K562 (cell line): ENCODE measurements at regions of chr15 and their contacts with region 1.

Region 1: DNA sequence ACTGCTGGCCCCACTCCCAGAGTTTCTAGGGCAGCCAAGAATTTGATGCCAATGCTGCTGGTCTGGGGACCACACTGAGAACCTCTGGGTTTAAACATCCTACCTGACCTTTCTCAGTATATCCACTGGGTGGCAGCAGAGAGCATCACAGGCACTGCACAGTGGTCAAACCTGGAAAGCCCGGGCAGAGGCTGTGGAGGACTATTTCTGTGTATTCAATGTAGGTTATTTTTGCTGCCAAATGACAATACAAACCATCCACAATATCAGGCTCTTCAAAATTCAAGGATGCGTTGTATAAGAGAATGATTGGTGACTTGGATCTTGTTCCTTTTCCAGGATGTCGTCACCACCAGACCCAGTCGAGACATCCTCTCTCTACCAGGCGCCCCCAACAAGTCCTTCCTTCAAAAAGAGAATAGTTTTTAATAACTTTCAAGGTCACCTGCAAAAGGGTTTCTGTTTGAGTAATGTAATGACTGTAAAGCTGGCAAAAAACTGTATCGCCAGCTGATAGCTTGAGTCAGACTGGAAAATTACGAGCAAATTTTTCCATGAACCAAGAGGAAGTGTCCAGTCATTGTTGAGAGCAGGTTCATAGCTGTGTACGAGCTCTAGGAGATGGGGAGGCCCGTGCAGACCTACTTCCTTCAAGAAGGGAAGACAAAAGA is 30.5 kb upstream of the MYZAP start:
- DNase-seq: peak; percentile 71 to 82 (median 76)
- ATAC-seq: peak; percentile 98
- H3K4me3 ChIP-seq: no peak overlapping the region
- H3K27ac ChIP-seq: no peak overlapping the region
- H3K4me1 ChIP-seq: no peaks in the 10 kb centered on the region; a peak in 1 of 5 replicates
- H3K27me3 ChIP-seq: peaks cover 10 to 35% of the 10 kb centered on the region in 2 experiments
- CTCF ChIP-seq: peak; percentile 83 to 93 (median 84)
- EP300 ChIP-seq: no peak
- POLR2A ChIP-seq: no peak
- RAD21 ChIP-seq: peak; percentile 56 to 78

Region 2: GRCh38 chr15:57611938-57612337 is 50.8 kb after region 1 on chr15:
- CTCF ChIA-PET with region 1: no interaction called
- POLR2A ChIA-PET with region 1: no interaction called
- in situ Hi-C with region 1: no loop called
- intact Hi-C with region 1: loop called (anchors 5 kb)
- DNase-seq: no peak
- ATAC-seq: no peak
- H3K4me3 ChIP-seq: no peak overlapping the region
- H3K27ac ChIP-seq: no peak overlapping the region
- H3K4me1 ChIP-seq: no peaks in the 10 kb centered on the region
- H3K27me3 ChIP-seq: peaks cover 12 to 48% of the 10 kb centered on the region in 2 experiments; a peak in 4 of 5 replicates
- CTCF ChIP-seq: peak in 1 of 3 experiments; percentile 18; a peak in 1 of 6 replicates
- EP300 ChIP-seq: no peak
- POLR2A ChIP-seq: no peak
- RAD21 ChIP-seq: peak; percentile 10 to 36; a peak in 1 of 4 replicates